Sigmoid colon (tissue), 7 donors: ENCODE measurements at regions of chr10 and their contacts with region 1.

Region 1: DNA sequence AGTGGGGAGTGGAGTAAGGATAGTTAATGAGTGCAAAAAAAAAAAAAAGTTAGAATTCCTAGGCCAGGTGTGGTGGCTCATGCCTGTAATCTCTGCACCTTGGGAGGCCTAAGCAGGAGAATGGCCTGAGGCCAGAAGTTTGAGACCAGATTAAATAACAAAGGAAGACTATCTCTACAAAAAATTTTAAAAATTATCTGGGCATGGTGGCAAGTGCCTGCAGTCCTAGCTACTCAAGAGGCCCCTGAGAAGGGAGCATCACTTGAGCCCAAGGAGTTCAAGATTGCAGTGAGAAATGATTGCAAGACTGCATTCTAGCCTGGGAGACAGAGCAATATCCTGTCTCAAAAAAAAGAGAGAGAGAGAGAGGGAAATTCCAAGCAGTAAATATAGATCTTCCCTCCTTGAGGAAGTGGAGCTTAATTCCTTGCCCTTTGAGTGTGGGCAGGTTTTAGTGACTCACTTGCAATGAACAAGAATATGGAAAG is 19.5 kb upstream of the CSTF2T start:
- DNase-seq: no peak
- H3K4me3 ChIP-seq: no peak overlapping the region
- H3K27ac ChIP-seq: no peak overlapping the region
- H3K4me1 ChIP-seq: peaks cover 0 to 17% (median 13%) of the 10 kb centered on the region in 4 donors
- H3K27me3 ChIP-seq: no peaks in the 10 kb centered on the region
- CTCF ChIP-seq: no peak
- EP300 ChIP-seq: no peak
- POLR2A ChIP-seq: no peak

Region 2: DNA sequence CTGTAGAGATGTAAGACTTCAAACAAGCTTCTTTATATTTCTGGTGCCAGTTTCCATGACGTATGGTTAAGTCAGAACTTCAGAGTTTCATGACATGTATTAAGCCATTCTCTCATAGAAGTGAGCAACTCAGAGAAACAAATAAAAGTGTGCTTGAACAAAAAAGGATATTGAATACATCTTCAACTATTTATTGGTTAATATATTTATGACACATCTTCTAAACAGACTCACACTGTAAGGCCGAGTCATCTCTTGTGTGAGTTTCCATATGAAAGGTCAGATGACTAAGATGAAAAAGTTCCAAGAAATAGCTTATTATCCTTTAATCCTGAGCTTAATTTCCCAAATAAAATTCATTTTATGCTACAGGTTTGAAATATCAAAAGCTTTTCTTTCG is 86.0 kb after region 1 on chr10:
- intact Hi-C with region 1: loop called (anchors 5 kb)
- DNase-seq: no peak
- H3K4me3 ChIP-seq: no peak overlapping the region
- H3K27ac ChIP-seq: peak overlapping the region in 3 of 4 donors; percentile 26 to 41 (median 37)
- H3K4me1 ChIP-seq: peaks cover 0 to 39% (median 8%) of the 10 kb centered on the region in 4 donors
- H3K27me3 ChIP-seq: no peaks in the 10 kb centered on the region
- CTCF ChIP-seq: no peak
- EP300 ChIP-seq: peak in 1 of 4 donors; percentile 21
- POLR2A ChIP-seq: no peak